Activated T-helper 1 cell treated with anti-CD3 and anti-CD28 coated beads, Interleukin-12 subunit alpha, Interleukin-12 subunit beta, Interleukin-2, Interleukin-4 antibody, amounts not matched to agents 30 ng/mL and 10 ng/mL and 1 ng/mL, durations not matched to agents 14 hours and 24 hours and 36 hours (primary cell): ENCODE measurements at regions of chr16 and their contacts with region 1.

Region 1: GRCh38 chr16:8660841-8661301 is 13.5 kb upstream of the ABAT start:
- DNase-seq: peak; percentile 46
- H3K4me3 Mint-ChIP-seq: no peak overlapping the region
- H3K27ac Mint-ChIP-seq: no peak overlapping the region
- H3K4me1 Mint-ChIP-seq: no peaks in the 10 kb centered on the region
- H3K27me3 Mint-ChIP-seq: no peaks in the 10 kb centered on the region

Region 2: GRCh38 chr16:8674413-8675022 is 13.6 kb after region 1 on chr16 and contains the start of gene ABAT:
- intact Hi-C with region 1: loop called (anchors 2 kb)
- DNase-seq: peak; percentile 91
- H3K4me3 Mint-ChIP-seq: peak within 1 kb of the TSS; percentile 87
- H3K27ac Mint-ChIP-seq: peak within 1 kb of the TSS; percentile 81
- H3K4me1 Mint-ChIP-seq: peaks cover 20% of the 10 kb centered on the region
- H3K27me3 Mint-ChIP-seq: peaks cover 6% of the 10 kb centered on the region
- total RNA-seq, gene ABAT: 7.3 and 7.7 TPM in 2 replicates

Region 3: DNA sequence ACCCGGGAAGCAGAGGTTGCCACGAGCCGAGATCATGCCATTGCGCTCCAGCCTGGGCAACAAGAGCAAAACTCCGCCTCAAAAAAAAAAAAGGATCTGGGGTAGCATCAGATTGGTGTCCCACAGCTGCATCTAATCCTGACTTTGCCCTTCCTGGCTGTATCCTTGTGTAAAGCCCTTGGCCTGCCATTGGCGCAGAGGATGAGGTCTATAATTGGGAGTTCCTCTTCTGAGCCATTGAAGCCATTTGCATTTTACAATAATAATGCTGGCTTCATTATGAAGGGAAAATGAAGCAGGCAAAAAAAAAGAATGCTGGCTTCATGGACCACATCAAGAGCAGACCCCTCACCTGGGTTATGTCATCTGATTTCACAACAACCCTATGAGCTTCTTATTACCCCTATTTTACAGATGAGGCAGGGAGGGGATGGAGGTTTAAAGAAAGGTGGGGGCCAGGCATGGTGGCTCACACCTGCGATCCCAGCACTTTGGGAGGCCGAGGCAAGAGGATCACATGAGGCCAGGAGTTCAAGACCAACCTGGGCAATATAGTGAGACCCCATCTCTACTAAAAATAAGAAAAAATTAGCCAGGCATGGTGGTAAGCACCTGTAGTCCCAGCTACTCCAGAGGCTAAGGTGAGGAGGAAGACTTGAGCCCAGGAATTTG is 220.1 kb after region 1 on chr16:
- intact Hi-C with region 1: loop called (anchors 1 kb)
- DNase-seq: no peak
- H3K4me3 Mint-ChIP-seq: no peak overlapping the region
- H3K27ac Mint-ChIP-seq: no peak overlapping the region
- H3K4me1 Mint-ChIP-seq: no peaks in the 10 kb centered on the region
- H3K27me3 Mint-ChIP-seq: peaks cover 2% of the 10 kb centered on the region